ENCODE measurements at regions of chr2 and their contacts with region 1.

Region 1: DNA sequence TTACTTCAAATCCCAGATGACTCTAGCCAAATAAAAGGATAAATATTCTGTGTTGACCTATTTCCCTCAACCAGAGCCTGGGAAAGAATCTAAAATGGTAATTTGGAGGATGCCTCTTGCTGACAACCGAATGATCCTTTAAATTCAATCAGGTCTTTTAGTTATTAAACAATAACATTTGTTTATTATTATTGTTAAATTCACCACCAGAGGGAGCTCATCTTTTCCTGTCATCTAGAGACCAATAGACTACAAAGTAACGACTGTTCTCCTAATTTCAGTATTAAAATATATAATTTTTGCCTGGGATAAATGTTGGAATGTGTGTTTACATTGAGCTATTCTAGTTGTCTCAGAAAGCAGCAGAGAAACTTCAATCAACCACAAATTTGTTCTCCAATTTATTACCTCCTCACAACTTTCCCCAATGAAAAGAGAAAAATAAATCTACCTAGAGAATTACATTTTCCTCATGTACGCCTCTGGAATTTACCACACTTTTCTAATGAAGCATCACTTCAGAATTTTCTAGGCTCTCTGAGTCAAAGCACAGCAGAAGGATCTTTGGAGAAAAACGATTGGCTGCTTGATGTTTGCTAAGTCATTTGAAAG is 142.7 kb downstream of the SCG2 start:
- DNase-seq: peak; percentile 49
- H3K4me3 Mint-ChIP-seq: no peak overlapping the region
- H3K27ac Mint-ChIP-seq: no peak overlapping the region
- H3K4me1 Mint-ChIP-seq: peaks cover 25% of the 10 kb centered on the region
- H3K27me3 Mint-ChIP-seq: no peaks in the 10 kb centered on the region
- CTCF ChIP-seq: peak; percentile 47

Region 2: DNA sequence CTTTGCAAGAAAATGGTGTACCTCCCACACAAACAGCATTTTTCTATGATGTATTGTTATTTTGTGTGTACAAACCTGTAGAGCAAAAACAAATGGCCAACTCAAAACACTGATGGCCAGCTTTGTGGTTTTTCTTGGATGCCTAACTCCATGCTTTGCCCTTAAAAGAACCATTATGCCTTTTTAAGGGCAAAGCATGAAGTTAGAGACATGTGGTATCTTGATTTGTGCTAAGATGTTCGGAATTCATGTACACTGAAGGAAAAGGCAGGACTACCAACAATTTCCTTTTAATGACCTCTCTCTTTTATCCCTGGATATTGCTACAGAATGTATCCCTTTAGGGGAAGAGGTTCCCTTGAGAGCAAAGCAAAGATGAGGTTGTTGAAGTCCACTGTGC is 130.9 kb before region 1 on chr2:
- CTCF ChIA-PET with region 1: no interaction called
- POLR2A ChIA-PET with region 1: no interaction called
- intact Hi-C with region 1: no loop called
- DNase-seq: no peak
- H3K4me3 Mint-ChIP-seq: no peak overlapping the region
- H3K27ac Mint-ChIP-seq: no peak overlapping the region
- H3K4me1 Mint-ChIP-seq: no peaks in the 10 kb centered on the region
- H3K27me3 Mint-ChIP-seq: no peaks in the 10 kb centered on the region
- CTCF ChIP-seq: no peak

Region 3: GRCh38 chr2:223585666-223586065 is 126.2 kb after region 1 on chr2:
- CTCF ChIA-PET with region 1: no interaction called
- POLR2A ChIA-PET with region 1: no interaction called
- intact Hi-C with region 1: no loop called
- DNase-seq: peak; percentile 21
- H3K4me3 Mint-ChIP-seq: no peak overlapping the region
- H3K27ac Mint-ChIP-seq: no peak overlapping the region
- H3K4me1 Mint-ChIP-seq: peaks cover 4% of the 10 kb centered on the region
- H3K27me3 Mint-ChIP-seq: no peaks in the 10 kb centered on the region
- CTCF ChIP-seq: no peak

Region 4: GRCh38 chr2:223613017-223613950 is 153.8 kb after region 1 on chr2:
- CTCF ChIA-PET with region 1: no interaction called
- POLR2A ChIA-PET with region 1: no interaction called
- intact Hi-C with region 1: loop called (anchors 2 kb)
- DNase-seq: peak; percentile 98
- H3K4me3 Mint-ChIP-seq: peak overlapping the region; percentile 66
- H3K27ac Mint-ChIP-seq: peak overlapping the region; percentile 69
- H3K4me1 Mint-ChIP-seq: no peaks in the 10 kb centered on the region
- H3K27me3 Mint-ChIP-seq: no peaks in the 10 kb centered on the region
- CTCF ChIP-seq: no peak

Measured in MCF 10A (cell line).